ENCODE measurements at regions of chr2 and their contacts with region 1.

Region 1: GRCh38 chr2:232568161-232568560 is 17.7 kb downstream of the EIF4E2 start:
- DNase-seq: peak; percentile 86
- H3K4me3 ChIP-seq: no peak overlapping the region
- H3K27ac ChIP-seq: peak overlapping the region; percentile 64
- H3K4me1 ChIP-seq: peaks cover 15% of the 10 kb centered on the region
- H3K27me3 ChIP-seq: no peaks in the 10 kb centered on the region
- CTCF ChIP-seq: no peak

Region 2: DNA sequence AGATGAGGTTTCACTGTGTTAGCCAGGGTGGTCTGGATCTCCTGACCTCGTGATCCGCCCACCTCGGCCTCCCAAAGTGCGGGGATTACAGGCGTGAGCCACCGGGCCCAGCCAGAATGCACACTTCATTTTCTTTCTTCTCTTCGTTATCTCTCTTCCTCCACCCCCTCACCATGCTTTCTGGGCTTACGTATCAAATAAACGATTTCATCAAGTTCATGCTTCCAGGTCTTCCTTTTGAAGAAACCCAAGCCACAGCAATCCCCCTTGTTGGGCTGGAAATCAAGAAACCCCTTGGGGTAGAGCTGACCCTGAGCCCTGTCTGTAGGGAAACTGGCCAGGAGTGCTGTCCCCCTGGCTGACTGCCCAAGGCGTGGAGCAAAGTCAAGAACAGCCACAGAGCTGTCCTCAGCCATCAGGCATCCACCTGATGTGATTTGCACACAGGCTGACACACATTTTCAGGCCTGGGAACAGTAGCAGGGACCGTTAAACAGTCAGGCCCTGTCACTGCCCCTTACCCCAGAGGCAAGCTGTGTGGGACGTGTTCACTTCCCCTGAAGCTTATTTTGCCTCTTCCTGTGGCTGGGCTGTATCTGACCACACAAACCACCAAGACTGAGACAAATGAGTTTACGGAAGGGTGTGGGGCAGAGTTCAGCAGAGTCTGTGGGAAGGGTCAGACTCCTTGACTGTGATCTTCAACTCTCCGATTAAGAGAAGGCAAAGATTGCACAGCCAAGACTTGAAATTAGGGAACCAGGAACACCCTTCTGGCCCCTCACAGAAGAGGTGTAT is 1022.9 kb before region 1 on chr2:
- CTCF ChIA-PET with region 1: no interaction called
- dilution Hi-C with region 1: no loop called
- in situ Hi-C with region 1: no loop called
- intact Hi-C with region 1: no loop called
- DNase-seq: peak; percentile 26
- H3K4me3 ChIP-seq: no peak overlapping the region
- H3K27ac ChIP-seq: no peak overlapping the region
- H3K4me1 ChIP-seq: no peaks in the 10 kb centered on the region
- H3K27me3 ChIP-seq: no peaks in the 10 kb centered on the region
- CTCF ChIP-seq: no peak

Region 3: GRCh38 chr2:232588680-232589585 is 20.8 kb after region 1 on chr2:
- CTCF ChIA-PET with region 1: no interaction called
- dilution Hi-C with region 1: no loop called
- in situ Hi-C with region 1: no loop called
- intact Hi-C with region 1: loop called (anchors 2 kb)
- DNase-seq: peak; percentile 78
- H3K4me3 ChIP-seq: no peak overlapping the region
- H3K27ac ChIP-seq: peak overlapping the region; percentile 36
- H3K4me1 ChIP-seq: peaks cover 37% of the 10 kb centered on the region
- H3K27me3 ChIP-seq: no peaks in the 10 kb centered on the region
- CTCF ChIP-seq: no peak